Left ventricle myocardium superior (tissue), 1 donor: ENCODE measurements at regions of chr19 and their contacts with region 1.

Region 1: GRCh38 chr19:16383584-16384161 is 59.0 kb downstream of the KLF2 start:
- DNase-seq: no peak
- ATAC-seq: no peak

Region 2: GRCh38 chr19:16247353-16248182 is 136.1 kb before region 1 on chr19:
- intact Hi-C with region 1: loop called (anchors 2 kb)
- DNase-seq: peak; percentile 93
- ATAC-seq: peak; percentile 98